Heart right ventricle (tissue), 16 donors: ENCODE measurements at regions of chr12 and their contacts with region 1.

Region 1: GRCh38 chr12:3034067-3034750 is 43.0 kb upstream of the TSPAN9 start:
- DNase-seq: peak; percentile 65 to 66
- ATAC-seq: peak; percentile 67 to 81 (median 74)
- H3K4me3 ChIP-seq: no peak overlapping the region
- H3K27ac ChIP-seq: no peak overlapping the region
- H3K4me1 ChIP-seq: peaks cover 0 to 53% (median 22%) of the 10 kb centered on the region in 9 donors
- H3K27me3 ChIP-seq: no peaks in the 10 kb centered on the region
- CTCF ChIP-seq: peak; percentile 49 to 79 (median 75)

Region 2: GRCh38 chr12:2853626-2854025 is 180.6 kb before region 1 on chr12:
- intact Hi-C with region 1: loop called in 9 of 10 experiments (anchors 5 to 10 kb)
- DNase-seq: peak; percentile 85
- ATAC-seq: peak; percentile 77 to 94 (median 90)
- H3K4me3 ChIP-seq: no peak overlapping the region
- H3K27ac ChIP-seq: no peak overlapping the region
- H3K4me1 ChIP-seq: peaks cover 0 to 5% (median 0%) of the 10 kb centered on the region in 9 donors
- H3K27me3 ChIP-seq: no peaks in the 10 kb centered on the region
- CTCF ChIP-seq: peak; percentile 77 to 89 (median 87)

Region 3: GRCh38 chr12:2884810-2885209 is 149.4 kb before region 1 on chr12:
- intact Hi-C with region 1: loop called in 7 of 10 experiments (anchors 2 to 10 kb)
- DNase-seq: no peak
- ATAC-seq: no peak
- H3K4me3 ChIP-seq: no peak overlapping the region
- H3K27ac ChIP-seq: no peak overlapping the region
- H3K4me1 ChIP-seq: peaks cover 0 to under 1% (median 0%) of the 10 kb centered on the region in 9 donors
- H3K27me3 ChIP-seq: no peaks in the 10 kb centered on the region
- CTCF ChIP-seq: no peak

Region 4: GRCh38 chr12:2944401-2945047 is 89.7 kb before region 1 on chr12:
- intact Hi-C with region 1: loop called in 1 of 10 experiments (anchors 5 kb)
- DNase-seq: peak; percentile 27 to 38
- ATAC-seq: peak; percentile 47 to 91 (median 70)
- H3K4me3 ChIP-seq: no peak overlapping the region
- H3K27ac ChIP-seq: no peak overlapping the region
- H3K4me1 ChIP-seq: peaks cover 0 to 10% (median 6%) of the 10 kb centered on the region in 9 donors
- H3K27me3 ChIP-seq: no peaks in the 10 kb centered on the region
- CTCF ChIP-seq: peak; percentile 47 to 78 (median 68)

Region 5: DNA sequence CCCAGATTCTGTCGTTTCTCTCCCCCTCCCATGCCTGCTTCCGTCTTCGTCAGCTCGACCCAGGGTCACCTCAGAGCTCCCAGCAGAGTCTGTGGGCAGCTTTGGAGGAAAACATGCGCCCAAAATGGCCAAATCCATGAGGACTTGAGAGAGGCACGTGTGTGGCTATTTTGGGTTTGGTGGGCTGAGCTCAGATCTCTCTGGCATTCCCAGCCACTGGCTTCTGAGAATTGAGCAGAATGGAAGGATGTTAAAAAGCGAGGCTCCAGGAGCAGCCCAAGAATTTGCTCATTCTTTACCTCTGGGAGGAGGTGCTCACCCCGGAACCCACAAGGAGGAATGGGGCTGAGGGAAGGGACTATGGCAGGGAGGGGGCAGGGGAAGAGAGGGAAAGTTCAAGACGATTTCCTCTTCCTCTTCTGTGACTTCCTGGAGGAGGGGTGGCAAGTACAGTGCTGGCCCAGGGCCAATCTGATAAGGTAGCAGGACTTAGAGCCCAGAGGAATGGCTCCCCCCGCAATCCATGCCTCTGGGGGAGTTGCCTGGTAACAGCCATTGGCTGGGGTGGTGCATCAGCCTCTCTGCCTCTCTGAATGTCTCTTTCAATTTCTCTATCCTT is 63.1 kb after region 1 on chr12:
- intact Hi-C with region 1: no loop called
- DNase-seq: peak; percentile 79 to 92
- ATAC-seq: peak; percentile 80 to 94 (median 92)
- H3K4me3 ChIP-seq: peak overlapping the region in 6 of 10 donors; percentile 9 to 33 (median 16)
- H3K27ac ChIP-seq: peak overlapping the region; percentile 41 to 90 (median 78)
- H3K4me1 ChIP-seq: peaks cover 14 to 73% (median 67%) of the 10 kb centered on the region in 9 donors
- H3K27me3 ChIP-seq: no peaks in the 10 kb centered on the region
- CTCF ChIP-seq: no peak